A673 (cell line): ENCODE measurements at regions of chr6 and their contacts with region 1.

Region 1: GRCh38 chr6:125301435-125302391 is at the start of gene HDDC2:
- DNase-seq: peak; percentile 53
- H3K4me3 ChIP-seq: peak within 1 kb of the TSS; percentile 89
- H3K27ac ChIP-seq: peak within 1 kb of the TSS; percentile 89
- H3K4me1 ChIP-seq: peaks cover 14% of the 10 kb centered on the region
- H3K27me3 ChIP-seq: no peaks in the 10 kb centered on the region
- CTCF ChIP-seq: no peak
- total RNA-seq, gene HDDC2: 87.6 and 93.2 TPM in 2 replicates

Region 2: DNA sequence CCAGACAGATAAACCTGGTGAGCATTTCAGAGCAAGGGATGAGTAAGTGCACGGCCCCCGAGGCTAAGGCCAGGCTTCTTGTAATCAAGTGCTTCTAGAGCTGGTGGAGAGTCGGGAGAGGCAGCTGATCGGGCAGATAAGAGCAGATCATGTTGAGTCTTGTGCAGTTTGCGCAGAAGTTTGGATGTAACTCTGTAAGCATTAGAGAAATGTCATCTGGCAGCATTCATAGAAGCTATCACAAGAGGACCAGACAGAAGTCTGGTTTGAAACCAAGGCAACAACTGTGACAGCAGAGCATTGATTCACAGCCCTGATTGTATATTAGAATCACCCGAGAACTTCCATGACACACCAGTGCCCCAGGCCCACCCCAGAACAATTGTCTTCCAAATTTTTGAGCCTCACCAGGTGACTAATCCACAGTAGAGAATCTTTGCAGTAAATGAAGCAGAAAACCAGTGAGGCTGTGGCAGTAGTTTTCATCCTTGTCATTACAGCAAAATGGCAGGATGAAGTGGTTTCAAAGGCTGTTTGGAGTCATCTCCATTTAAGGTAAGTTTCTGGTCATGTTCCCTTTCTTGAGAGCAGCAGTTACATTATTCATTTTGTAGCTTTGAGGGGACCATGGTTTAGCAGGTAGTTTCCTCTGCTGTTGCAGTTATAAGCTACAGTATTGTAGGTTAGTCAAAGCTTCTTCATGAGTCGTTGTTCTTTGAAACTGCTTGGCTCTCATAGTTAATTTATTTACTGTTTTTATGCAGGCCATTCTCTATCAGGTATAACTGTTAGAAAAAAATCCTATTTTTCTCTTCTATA is 255.4 kb before region 1 on chr6:
- CTCF ChIA-PET with region 1: no interaction called
- POLR2A ChIA-PET with region 1: no interaction called
- intact Hi-C with region 1: no loop called
- DNase-seq: no peak
- H3K4me3 ChIP-seq: no peak overlapping the region
- H3K27ac ChIP-seq: no peak overlapping the region
- H3K4me1 ChIP-seq: peaks cover 6% of the 10 kb centered on the region
- H3K27me3 ChIP-seq: no peaks in the 10 kb centered on the region
- CTCF ChIP-seq: no peak

Region 3: DNA sequence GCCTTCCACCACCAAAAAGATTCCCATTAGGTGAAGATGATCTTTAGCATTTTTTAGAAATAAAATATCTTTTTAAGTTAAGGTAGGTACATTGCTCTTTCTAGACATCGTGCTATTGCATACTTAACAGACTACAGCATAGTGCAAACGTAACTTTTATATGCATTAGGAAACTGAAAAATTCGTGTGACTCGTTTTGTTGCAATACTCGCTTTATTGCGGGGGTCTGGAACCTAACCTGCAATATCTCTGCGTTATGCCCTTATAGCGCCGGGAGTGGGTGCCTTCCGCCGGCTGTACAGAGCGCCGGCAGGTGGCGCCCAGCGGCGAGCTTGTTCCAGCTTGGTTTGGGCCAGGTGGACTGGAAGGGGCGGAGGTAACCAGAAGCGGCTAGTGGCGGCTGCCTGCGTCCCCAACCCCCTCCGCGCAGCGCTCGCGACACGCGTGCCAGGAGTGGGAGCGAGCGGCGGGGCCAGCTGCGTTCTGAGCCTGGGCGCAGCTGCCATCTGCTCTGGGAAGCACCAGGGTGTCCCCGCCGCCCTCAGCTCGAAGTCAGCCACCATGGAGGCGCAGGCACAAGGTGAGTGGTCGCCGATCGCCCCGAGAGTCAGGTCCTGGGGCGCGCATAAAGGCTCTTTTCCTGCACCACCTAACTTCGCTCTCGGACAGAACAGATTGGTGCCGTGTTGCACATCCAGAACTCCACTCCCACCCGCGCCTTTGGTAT is 148.2 kb before region 1 on chr6 and contains the start of gene TPD52L1:
- CTCF ChIA-PET with region 1: no interaction called
- POLR2A ChIA-PET with region 1: no interaction called
- intact Hi-C with region 1: loop called (anchors 2 kb)
- DNase-seq: peak; percentile 72
- H3K4me3 ChIP-seq: peak within 1 kb of the TSS; percentile 55
- H3K27ac ChIP-seq: no peak within 1 kb of the TSS
- H3K4me1 ChIP-seq: peaks cover 5% of the 10 kb centered on the region
- H3K27me3 ChIP-seq: no peaks in the 10 kb centered on the region
- CTCF ChIP-seq: peak; percentile 96
- total RNA-seq, gene TPD52L1: 2.0 and 5.4 TPM in 2 replicates

Region 4: DNA sequence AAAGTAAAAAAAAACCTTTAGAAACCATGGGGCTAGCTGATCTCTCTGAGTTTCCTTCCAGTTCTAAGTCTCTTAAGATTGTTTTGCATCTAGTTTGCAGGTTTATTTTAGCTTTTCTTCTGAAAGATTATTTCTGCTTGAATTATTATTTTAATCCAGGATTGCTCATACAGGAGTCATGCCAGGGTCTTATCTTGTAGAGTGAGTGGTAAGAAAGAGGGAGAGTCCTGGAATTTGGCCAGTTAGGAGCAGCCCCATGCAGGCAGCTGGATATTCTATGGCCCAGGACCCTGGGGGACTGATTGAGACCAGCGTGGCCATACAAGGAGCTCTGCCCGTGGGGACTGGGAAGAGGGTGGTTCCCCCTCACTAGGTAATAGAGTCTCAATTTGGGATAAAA is 268.8 kb after region 1 on chr6:
- CTCF ChIA-PET with region 1: no interaction called
- POLR2A ChIA-PET with region 1: no interaction called
- intact Hi-C with region 1: no loop called
- DNase-seq: no peak
- H3K4me3 ChIP-seq: no peak overlapping the region
- H3K27ac ChIP-seq: no peak overlapping the region
- H3K4me1 ChIP-seq: no peaks in the 10 kb centered on the region
- H3K27me3 ChIP-seq: no peaks in the 10 kb centered on the region
- CTCF ChIP-seq: no peak